ENCODE measurements at regions of chr6 and their contacts with region 1.

Region 1: GRCh38 chr6:6315660-6316059 is 4.8 kb downstream of the F13A1 start:
- DNase-seq: peak; percentile 40 to 69 (median 62)
- ATAC-seq: peak; percentile 85
- H3K4me3 ChIP-seq: no peak overlapping the region
- H3K27ac ChIP-seq: no peak overlapping the region
- H3K4me1 ChIP-seq: peaks cover 0 to 3% of the 10 kb centered on the region in 2 experiments; a peak in 1 of 5 replicates
- H3K27me3 ChIP-seq: peaks cover 6 to 10% of the 10 kb centered on the region in 2 experiments; a peak in 3 of 5 replicates
- CTCF ChIP-seq: peak; percentile 68 to 88 (median 85)
- EP300 ChIP-seq: no peak
- POLR2A ChIP-seq: no peak
- RAD21 ChIP-seq: peak; percentile 28 to 64

Region 2: DNA sequence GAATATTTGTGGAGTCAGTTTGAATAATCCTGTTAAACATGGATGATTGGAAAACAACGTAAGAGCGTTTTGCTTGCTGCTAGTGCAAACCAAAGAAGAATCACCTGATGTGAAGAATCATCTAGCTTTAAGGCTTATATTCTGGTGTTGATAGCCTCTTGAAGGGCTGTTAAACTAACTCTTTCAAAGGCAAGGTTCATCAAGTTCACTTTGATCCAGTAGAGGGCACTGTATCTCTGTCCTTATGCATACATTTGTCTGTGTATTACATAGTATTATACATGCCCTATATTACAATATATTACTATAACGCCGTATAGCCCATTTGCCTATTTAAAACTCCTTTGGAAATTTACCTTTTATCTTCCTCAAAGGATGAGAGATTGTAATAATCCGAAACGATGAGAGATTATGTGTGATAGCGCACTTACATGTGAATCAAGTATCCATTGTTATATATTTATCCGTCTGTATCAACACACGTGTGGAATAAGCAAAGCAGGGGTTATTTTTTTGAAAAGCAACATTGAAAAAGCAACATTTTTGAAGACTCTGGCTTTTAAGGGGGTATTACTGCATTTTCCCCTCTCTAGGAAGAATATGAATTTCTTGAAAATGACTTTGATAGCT is 258.1 kb before region 1 on chr6:
- CTCF ChIA-PET with region 1: no interaction called
- POLR2A ChIA-PET with region 1: no interaction called
- in situ Hi-C with region 1: no loop called
- intact Hi-C with region 1: loop called (anchors 10 kb)
- DNase-seq: peak; percentile 31 to 64 (median 44)
- ATAC-seq: peak; percentile 93
- H3K4me3 ChIP-seq: no peak overlapping the region
- H3K27ac ChIP-seq: no peak overlapping the region
- H3K4me1 ChIP-seq: no peaks in the 10 kb centered on the region
- H3K27me3 ChIP-seq: peaks cover 0 to 5% of the 10 kb centered on the region in 2 experiments; a peak in 2 of 5 replicates
- CTCF ChIP-seq: peak; percentile 38 to 76 (median 66); a peak in 5 of 6 replicates
- EP300 ChIP-seq: no peak
- POLR2A ChIP-seq: no peak
- RAD21 ChIP-seq: peak; percentile 62 to 81

Measured in K562 (cell line).